Sigmoid colon (tissue), 7 donors: ENCODE measurements at regions of chr16 and their contacts with region 1.

Region 1: DNA sequence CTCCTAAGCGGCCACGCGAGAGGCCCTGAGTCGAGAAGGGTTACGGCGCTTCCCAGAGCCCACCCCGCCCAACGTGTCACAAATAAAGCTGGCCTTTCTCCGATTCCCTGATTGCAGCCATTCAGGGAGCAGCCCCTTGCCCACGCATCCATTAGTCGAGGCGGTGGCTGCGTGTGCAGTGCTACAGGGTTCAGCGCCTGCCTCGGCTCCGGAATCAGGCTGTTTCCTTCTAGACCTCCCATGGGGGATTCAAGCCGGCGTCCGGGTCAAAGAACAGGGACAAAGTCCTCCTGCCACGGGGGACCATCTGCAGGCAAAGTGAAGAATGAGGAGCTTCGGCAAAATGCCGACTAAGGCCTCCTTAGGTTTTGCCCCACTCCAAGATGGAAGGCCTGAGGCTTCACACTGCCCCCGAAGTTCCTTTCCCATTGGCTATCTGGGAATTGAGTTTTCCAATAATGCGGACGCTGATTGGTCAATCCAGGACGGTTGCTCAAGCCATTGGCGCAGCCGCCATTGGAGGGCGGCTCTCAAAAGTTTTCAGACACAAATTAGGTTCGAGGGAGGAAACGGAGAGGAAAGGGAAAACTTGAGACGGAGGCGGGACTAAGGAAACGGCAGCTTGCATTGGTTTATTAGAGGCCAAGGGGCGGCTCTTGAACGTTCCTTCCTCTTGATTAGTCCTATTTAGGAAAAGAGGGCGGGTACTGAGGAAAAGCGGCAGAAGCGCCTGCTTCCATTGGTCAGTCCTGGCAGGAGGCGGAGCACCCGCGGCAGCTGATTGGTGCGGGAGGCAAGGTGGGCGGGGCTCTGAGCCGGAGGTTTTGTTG is 430 bp upstream of the KATNB1 start:
- DNase-seq: peak; percentile 99
- H3K4me3 ChIP-seq: peak overlapping the region; percentile 83 to 97 (median 93)
- H3K27ac ChIP-seq: peak overlapping the region; percentile 88 to 93 (median 90)
- H3K4me1 ChIP-seq: peaks cover 0 to 23% (median 18%) of the 10 kb centered on the region in 4 donors
- H3K27me3 ChIP-seq: no peaks in the 10 kb centered on the region
- CTCF ChIP-seq: no peak
- EP300 ChIP-seq: no peak
- POLR2A ChIP-seq: peak; percentile 32 to 44

Region 2: DNA sequence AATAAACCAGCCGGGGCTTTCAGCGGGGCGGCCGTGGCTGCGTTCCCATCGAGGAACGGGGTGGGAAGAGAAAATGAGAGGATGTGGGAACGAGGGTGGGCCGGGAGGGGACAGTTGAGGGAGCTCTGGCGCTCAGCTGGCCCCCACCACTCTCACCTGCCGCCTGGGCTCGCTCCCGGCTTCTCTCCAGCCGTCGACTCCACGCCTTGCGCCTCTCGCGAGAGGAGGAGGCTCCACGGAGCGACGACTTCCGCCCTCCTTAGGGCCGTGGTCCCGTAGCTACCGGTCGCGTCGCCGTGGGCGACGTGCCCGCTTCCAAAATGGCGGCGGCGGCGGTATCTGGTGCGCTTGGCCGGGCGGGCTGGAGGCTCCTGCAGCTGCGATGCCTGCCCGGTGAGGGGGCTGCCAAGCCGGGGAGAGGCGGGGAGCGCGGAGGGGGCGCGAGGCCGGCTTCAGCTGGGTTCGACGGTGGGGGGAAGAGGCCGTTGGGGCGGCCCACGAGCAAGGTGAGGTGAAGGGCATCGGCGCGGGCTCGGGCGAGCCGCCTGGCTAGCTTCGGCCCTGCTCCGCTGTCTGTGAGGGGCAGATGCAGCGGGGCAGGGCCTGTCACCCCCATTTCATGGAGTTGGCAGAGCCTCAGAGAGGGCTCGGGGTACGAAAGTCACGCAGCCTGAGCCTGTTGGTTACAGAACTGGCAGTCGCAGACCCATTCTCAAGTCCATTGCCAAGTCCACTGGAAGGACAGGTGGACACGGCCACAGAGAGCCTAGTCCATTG is 287.8 kb before region 1 on chr16 and contains the starts of genes CIAPIN1 and COQ9:
- intact Hi-C with region 1: loop called (anchors 10 kb)
- DNase-seq: peak; percentile 98
- H3K4me3 ChIP-seq: peak within 1 kb of the TSS; percentile 81 to 99 (median 96)
- H3K27ac ChIP-seq: peak within 1 kb of the TSS; percentile 89 to 97 (median 94)
- H3K4me1 ChIP-seq: peaks cover 0 to 31% (median 19%) of the 10 kb centered on the region in 4 donors
- H3K27me3 ChIP-seq: no peaks in the 10 kb centered on the region
- CTCF ChIP-seq: no peak
- EP300 ChIP-seq: no peak
- POLR2A ChIP-seq: peak; percentile 89 to 91
- total RNA-seq, gene CIAPIN1: 17.1 to 22.5 (median 20.1) TPM
- total RNA-seq, gene COQ9: 61.4 to 74.5 (median 71.3) TPM

Region 3: GRCh38 chr16:57802341-57803133 is 67.4 kb after region 1 on chr16 and contains the start of gene KIFC3:
- intact Hi-C with region 1: loop called (anchors 5 kb)
- DNase-seq: peak; percentile 92
- H3K4me3 ChIP-seq: peak within 1 kb of the TSS; percentile 48 to 77 (median 66)
- H3K27ac ChIP-seq: peak within 1 kb of the TSS; percentile 83 to 92 (median 84)
- H3K4me1 ChIP-seq: peaks cover 0 to 69% (median 53%) of the 10 kb centered on the region in 4 donors
- H3K27me3 ChIP-seq: no peaks in the 10 kb centered on the region
- CTCF ChIP-seq: no peak
- EP300 ChIP-seq: no peak
- POLR2A ChIP-seq: no peak
- total RNA-seq, gene KIFC3: 10.0 to 31.2 (median 21.6) TPM

Region 4: GRCh38 chr16:58000706-58001676 is 265.9 kb after region 1 on chr16 and contains the start of gene USB1:
- intact Hi-C with region 1: loop called (anchors 2 kb)
- DNase-seq: peak; percentile 92
- H3K4me3 ChIP-seq: peak within 1 kb of the TSS; percentile 48 to 91 (median 82)
- H3K27ac ChIP-seq: peak within 1 kb of the TSS; percentile 93 to 98 (median 96)
- H3K4me1 ChIP-seq: peaks cover 0 to 45% (median 30%) of the 10 kb centered on the region in 4 donors
- H3K27me3 ChIP-seq: no peaks in the 10 kb centered on the region
- CTCF ChIP-seq: peak in 3 of 4 experiments; percentile 22 to 63 (median 58)
- EP300 ChIP-seq: no peak
- POLR2A ChIP-seq: peak; percentile 69 to 79
- total RNA-seq, gene USB1: 19.9 to 44.9 (median 34.9) TPM

Region 5: DNA sequence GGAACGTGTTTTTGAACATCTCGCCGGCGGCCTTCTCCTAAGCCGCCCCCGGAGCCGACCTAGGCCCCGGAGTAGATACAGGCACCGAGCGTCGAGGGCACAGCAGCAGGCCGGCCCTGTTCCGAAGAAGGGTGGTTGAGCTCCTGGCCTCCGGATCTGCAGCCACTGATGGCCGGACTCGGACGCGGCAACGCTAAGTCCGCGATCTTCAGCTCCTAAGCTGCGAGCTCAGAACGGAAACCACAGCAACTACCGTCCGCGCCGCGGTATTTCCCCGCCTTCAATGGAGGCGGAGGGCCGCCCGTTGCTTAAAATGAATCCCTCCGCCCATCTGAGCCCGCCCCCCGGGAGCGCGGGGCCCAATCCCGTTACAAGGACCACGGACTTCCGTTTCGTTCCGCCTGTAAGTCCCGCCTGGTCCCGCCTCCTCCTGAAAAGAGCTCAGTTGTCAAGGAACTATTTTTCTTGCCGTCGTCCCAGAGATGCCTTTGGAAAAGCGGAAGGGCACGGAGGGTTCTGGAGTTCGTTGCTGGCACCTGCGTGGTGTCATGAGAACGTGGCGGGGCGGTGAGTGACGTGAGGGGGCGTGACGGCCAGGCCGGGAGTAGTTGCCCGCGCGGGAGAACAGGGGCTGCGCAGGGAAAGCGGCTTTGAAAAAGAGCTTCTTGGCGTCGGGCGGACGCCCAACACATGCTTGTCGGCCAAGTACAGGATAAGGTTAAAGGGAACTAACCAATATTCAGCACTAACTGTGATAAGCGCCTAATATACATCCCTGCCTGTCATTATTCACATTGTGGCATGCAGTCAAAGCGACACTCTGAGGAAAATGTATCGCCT is 394.2 kb after region 1 on chr16 and contains the start of gene CFAP20:
- intact Hi-C with region 1: loop called (anchors 10 kb)
- DNase-seq: peak; percentile 99
- H3K4me3 ChIP-seq: peak within 1 kb of the TSS; percentile 73 to 92 (median 84)
- H3K27ac ChIP-seq: peak within 1 kb of the TSS; percentile 89 to 95 (median 92)
- H3K4me1 ChIP-seq: peaks cover 0 to 41% (median 39%) of the 10 kb centered on the region in 4 donors
- H3K27me3 ChIP-seq: no peaks in the 10 kb centered on the region
- CTCF ChIP-seq: no peak
- EP300 ChIP-seq: peak in 2 of 4 donors; percentile 52 to 73
- POLR2A ChIP-seq: peak; percentile 86 to 88
- total RNA-seq, gene CFAP20: 11.9 to 42.5 (median 26.6) TPM

Region 6: GRCh38 chr16:58515125-58515870 is 780.2 kb after region 1 on chr16 and contains the start of gene SETD6:
- intact Hi-C with region 1: loop called (anchors 10 kb)
- DNase-seq: peak; percentile 95
- H3K4me3 ChIP-seq: peak within 1 kb of the TSS; percentile 84 to 92 (median 86)
- H3K27ac ChIP-seq: peak within 1 kb of the TSS; percentile 78 to 88 (median 82)
- H3K4me1 ChIP-seq: peaks cover 0 to 28% (median 19%) of the 10 kb centered on the region in 4 donors
- H3K27me3 ChIP-seq: no peaks in the 10 kb centered on the region
- CTCF ChIP-seq: peak in 1 of 4 experiments; percentile 49
- EP300 ChIP-seq: no peak
- POLR2A ChIP-seq: no peak
- total RNA-seq, gene SETD6: 15.5 to 23.5 (median 19.9) TPM

Region 7: GRCh38 chr16:58684354-58685083 is 949.4 kb after region 1 on chr16 and contains the start of gene SLC38A7:
- intact Hi-C with region 1: loop called (anchors 5 kb)
- DNase-seq: peak; percentile 94
- H3K4me3 ChIP-seq: peak within 1 kb of the TSS; percentile 70 to 95 (median 74)
- H3K27ac ChIP-seq: peak within 1 kb of the TSS; percentile 70 to 80 (median 76)
- H3K4me1 ChIP-seq: peaks cover 0 to 22% (median 18%) of the 10 kb centered on the region in 4 donors
- H3K27me3 ChIP-seq: no peaks in the 10 kb centered on the region
- CTCF ChIP-seq: no peak
- EP300 ChIP-seq: no peak
- POLR2A ChIP-seq: no peak
- total RNA-seq, gene SLC38A7: 9.5 to 17.4 (median 12.1) TPM